Activated CD8-positive, alpha-beta T cell treated with anti-CD3 and anti-CD28 coated beads for 36 hours (primary cell): ENCODE measurements at regions of chr11 and their contacts with region 1.

Region 1: GRCh38 chr11:128757235-128757711 is 63.4 kb downstream of the FLI1 start:
- DNase-seq: peak; percentile 88
- ATAC-seq: peak; percentile 81
- H3K4me3 Mint-ChIP-seq: peak overlapping the region; percentile 23
- H3K27ac Mint-ChIP-seq: peak overlapping the region; percentile 94
- H3K4me1 Mint-ChIP-seq: peaks cover 83% of the 10 kb centered on the region
- H3K27me3 Mint-ChIP-seq: no peaks in the 10 kb centered on the region
- CTCF ChIP-seq: peak; percentile 70

Region 2: GRCh38 chr11:128686745-128687177 is 70.5 kb before region 1 on chr11:
- CTCF ChIA-PET with region 1: interaction called, 16 read pairs
- POLR2A ChIA-PET with region 1: interaction called, 3 read pairs
- intact Hi-C with region 1: no loop called
- DNase-seq: peak; percentile 76
- ATAC-seq: peak; percentile 67
- H3K4me3 Mint-ChIP-seq: peak overlapping the region; percentile 74
- H3K27ac Mint-ChIP-seq: no peak overlapping the region
- H3K4me1 Mint-ChIP-seq: peaks cover 31% of the 10 kb centered on the region
- H3K27me3 Mint-ChIP-seq: peaks cover 37% of the 10 kb centered on the region
- CTCF ChIP-seq: no peak

Region 3: DNA sequence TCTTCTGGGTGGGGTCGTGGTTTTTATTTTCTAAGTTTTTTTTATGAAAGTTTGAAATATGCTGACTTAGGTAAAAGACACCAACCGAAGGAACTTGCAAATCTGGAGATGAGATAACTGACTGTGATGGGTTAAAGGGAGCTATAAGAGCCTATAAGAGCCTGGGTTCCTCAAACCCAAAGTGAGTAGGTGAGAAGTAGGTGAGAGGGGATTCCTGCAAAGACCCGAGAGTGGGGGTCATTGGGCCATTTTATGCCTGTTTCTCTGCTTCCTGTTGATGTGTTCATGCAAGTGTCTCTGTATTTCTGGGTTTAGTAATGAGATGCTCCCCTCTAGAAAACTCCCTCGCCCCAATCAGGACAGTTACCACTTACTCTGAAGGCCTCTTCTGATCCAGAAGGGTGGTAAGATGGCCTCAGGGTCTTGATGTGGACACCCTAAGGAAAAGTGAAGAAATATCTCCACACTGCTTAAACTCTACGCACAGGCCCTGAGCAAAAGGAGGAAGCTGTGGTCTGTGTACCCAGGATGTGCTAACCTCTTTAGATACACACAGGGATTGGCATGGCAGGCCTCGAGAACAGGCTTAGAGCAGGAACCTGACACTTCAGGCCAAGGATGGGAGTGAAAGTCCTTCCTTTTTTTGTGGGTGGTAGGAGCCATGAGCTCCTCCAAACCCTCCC is 61.6 kb before region 1 on chr11:
- CTCF ChIA-PET with region 1: interaction called, 7 read pairs
- POLR2A ChIA-PET with region 1: no interaction called
- intact Hi-C with region 1: loop called (anchors 5 kb)
- DNase-seq: peak; percentile 51
- ATAC-seq: peak; percentile 32
- H3K4me3 Mint-ChIP-seq: peak overlapping the region; percentile 92
- H3K27ac Mint-ChIP-seq: peak overlapping the region; percentile 97
- H3K4me1 Mint-ChIP-seq: peaks cover 50% of the 10 kb centered on the region
- H3K27me3 Mint-ChIP-seq: peaks cover 8% of the 10 kb centered on the region
- CTCF ChIP-seq: no peak

Region 4: DNA sequence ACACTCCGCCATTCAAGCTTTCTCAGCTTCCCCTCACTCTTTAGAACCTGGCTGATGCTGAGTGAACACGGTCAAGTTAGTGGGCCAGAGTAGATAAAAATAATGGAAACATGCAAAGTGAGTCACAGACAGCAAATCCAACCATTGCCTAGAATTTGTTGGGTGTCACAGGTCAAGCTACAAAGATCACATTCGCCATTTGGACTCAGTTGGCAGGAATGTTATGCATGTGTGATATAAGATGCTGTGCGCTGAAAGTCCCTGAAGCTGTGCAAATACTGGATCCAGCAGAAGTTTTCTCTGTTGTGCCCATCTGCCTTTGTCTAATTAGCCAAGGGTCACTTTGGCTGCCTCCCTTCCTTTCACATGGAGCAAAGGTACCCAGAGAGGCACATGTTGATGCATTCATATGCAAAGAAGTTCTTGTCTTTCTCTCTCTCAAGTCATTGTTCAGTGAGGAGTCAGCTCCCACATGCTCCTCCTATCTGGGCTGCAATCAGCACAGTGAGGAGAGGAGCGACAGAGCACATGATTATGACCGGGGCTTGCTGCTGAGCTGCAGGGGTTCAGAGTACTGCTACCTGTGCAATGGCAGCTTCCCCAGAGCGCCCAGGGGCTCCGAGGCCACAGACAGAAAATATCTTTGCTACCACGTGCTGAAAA is 23.7 kb before region 1 on chr11:
- CTCF ChIA-PET with region 1: interaction called, 54 read pairs
- POLR2A ChIA-PET with region 1: interaction called, 13 read pairs
- intact Hi-C with region 1: loop called (anchors 1 kb)
- DNase-seq: peak; percentile 58
- ATAC-seq: peak; percentile 53
- H3K4me3 Mint-ChIP-seq: peak overlapping the region; percentile 51
- H3K27ac Mint-ChIP-seq: peak overlapping the region; percentile 68
- H3K4me1 Mint-ChIP-seq: peaks cover 92% of the 10 kb centered on the region
- H3K27me3 Mint-ChIP-seq: no peaks in the 10 kb centered on the region
- CTCF ChIP-seq: no peak

Region 5: GRCh38 chr11:128738942-128739341 is 18.3 kb before region 1 on chr11:
- CTCF ChIA-PET with region 1: interaction called, 54 read pairs
- POLR2A ChIA-PET with region 1: interaction called, 13 read pairs
- intact Hi-C with region 1: loop called (anchors 1 kb)
- DNase-seq: no peak
- ATAC-seq: no peak
- H3K4me3 Mint-ChIP-seq: peak overlapping the region; percentile 28
- H3K27ac Mint-ChIP-seq: peak overlapping the region; percentile 77
- H3K4me1 Mint-ChIP-seq: peaks cover 81% of the 10 kb centered on the region
- H3K27me3 Mint-ChIP-seq: no peaks in the 10 kb centered on the region
- CTCF ChIP-seq: no peak

Region 6: GRCh38 chr11:128745311-128746136 is 11.7 kb before region 1 on chr11:
- CTCF ChIA-PET with region 1: interaction called, 11 read pairs
- POLR2A ChIA-PET with region 1: interaction called, 7 read pairs
- intact Hi-C with region 1: no loop called
- DNase-seq: no peak
- ATAC-seq: no peak
- H3K4me3 Mint-ChIP-seq: no peak overlapping the region
- H3K27ac Mint-ChIP-seq: no peak overlapping the region
- H3K4me1 Mint-ChIP-seq: peaks cover 78% of the 10 kb centered on the region
- H3K27me3 Mint-ChIP-seq: no peaks in the 10 kb centered on the region
- CTCF ChIP-seq: no peak

Region 7: DNA sequence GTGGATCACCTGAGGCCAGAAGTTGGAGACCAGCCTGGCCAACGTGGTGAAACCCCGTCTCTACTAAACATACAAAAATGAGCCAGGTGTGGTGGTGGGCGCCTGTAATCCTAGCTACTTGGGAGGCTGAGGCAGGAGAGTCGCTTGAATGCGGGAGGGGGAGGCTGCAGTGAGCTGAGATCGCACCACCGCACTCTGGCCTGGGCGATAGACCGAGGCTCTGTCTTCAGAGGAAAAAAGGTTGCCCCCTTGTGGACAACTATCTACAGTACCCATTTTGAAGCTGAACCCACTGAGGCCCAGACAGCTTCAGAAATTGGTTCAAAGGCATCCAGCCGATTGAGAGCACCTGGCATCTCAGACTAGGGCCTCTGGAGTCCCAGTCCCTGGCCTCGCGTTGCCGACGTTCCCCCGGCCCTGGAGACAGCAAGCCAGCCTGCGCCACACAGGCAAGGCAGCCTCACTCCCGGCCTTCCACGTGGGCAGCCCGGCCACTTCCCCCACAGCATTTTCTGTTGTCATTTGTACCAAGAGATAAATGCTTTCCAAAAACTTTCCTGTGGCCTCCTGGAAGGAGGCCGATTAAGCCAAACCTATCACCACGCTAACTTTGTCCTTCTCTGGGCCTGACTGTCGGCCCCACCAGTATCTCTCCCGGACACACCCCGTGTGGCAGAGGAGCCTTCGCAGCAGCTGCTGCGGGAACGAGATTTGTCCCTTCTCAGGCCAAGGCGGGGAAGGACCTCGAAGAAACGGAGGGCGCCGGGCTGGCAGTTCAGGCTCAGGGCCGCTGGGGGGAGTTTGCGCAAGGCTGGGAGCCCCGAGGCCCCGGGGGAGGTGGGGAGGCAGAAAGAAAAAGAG is 19.4 kb after region 1 on chr11:
- CTCF ChIA-PET with region 1: interaction called, 10 read pairs
- POLR2A ChIA-PET with region 1: interaction called, 4 read pairs
- intact Hi-C with region 1: no loop called
- DNase-seq: peak; percentile 47
- ATAC-seq: peak; percentile 68
- H3K4me3 Mint-ChIP-seq: no peak overlapping the region
- H3K27ac Mint-ChIP-seq: peak overlapping the region; percentile 71
- H3K4me1 Mint-ChIP-seq: peaks cover 40% of the 10 kb centered on the region
- H3K27me3 Mint-ChIP-seq: no peaks in the 10 kb centered on the region
- CTCF ChIP-seq: peak; percentile 49

Region 8: GRCh38 chr11:128821556-128821955 is 64.3 kb after region 1 on chr11:
- CTCF ChIA-PET with region 1: no interaction called
- POLR2A ChIA-PET with region 1: no interaction called
- intact Hi-C with region 1: no loop called
- DNase-seq: no peak
- ATAC-seq: no peak
- H3K4me3 Mint-ChIP-seq: no peak overlapping the region
- H3K27ac Mint-ChIP-seq: no peak overlapping the region
- H3K4me1 Mint-ChIP-seq: peaks cover 1% of the 10 kb centered on the region
- H3K27me3 Mint-ChIP-seq: no peaks in the 10 kb centered on the region
- CTCF ChIP-seq: no peak